ENCODE measurements at regions of chr3 and their contacts with region 1.

Region 1: DNA sequence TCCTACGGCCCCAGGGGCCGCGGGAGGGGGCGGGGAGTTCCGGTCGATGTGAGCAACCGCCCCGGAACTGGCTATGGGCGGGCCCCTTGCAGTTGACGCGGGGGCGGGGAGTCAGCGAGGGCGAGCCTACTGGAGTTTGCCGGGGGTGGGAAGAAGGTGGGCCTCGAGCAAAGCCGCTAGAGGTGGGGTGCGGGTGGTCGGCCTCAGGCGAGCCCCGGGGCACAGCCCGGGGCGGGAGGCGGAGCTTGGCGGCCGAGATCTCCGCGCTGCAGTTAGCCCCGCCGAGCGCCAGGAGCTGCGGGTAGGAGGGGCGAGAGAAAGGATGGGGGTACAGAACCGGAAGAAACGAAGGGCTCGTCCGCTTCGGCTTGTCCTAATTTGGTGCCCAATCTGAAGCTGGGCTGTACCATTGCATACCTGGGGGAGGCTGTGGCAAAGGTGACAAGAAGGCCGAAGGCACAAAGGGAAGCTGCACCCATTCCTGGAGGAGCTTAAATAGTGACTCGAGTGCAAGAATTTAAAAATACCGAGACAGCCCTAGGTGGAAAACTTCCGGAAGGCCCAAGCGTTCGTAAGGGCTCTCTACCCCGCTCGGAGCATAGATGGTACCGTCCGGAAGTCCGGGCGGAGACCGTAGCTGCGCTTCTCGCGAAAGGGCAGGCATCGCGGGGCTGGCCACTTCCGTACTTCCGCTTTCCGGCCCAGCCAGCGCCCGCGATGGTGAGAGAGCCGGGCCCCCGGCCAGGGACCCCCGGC is at the starts of genes ARPC4 and TADA3:
- DNase-seq: peak; percentile 96
- H3K4me3 Mint-ChIP-seq: peak within 1 kb of the TSS; percentile 98
- H3K27ac Mint-ChIP-seq: peak within 1 kb of the TSS; percentile 100
- H3K4me1 Mint-ChIP-seq: peaks cover 31% of the 10 kb centered on the region
- H3K27me3 Mint-ChIP-seq: no peaks in the 10 kb centered on the region
- CTCF ChIP-seq: no peak
- total RNA-seq, gene ARPC4: 122 and 132 TPM in 2 replicates
- total RNA-seq, gene TADA3: 72.0 and 77.1 TPM in 2 replicates

Region 2: DNA sequence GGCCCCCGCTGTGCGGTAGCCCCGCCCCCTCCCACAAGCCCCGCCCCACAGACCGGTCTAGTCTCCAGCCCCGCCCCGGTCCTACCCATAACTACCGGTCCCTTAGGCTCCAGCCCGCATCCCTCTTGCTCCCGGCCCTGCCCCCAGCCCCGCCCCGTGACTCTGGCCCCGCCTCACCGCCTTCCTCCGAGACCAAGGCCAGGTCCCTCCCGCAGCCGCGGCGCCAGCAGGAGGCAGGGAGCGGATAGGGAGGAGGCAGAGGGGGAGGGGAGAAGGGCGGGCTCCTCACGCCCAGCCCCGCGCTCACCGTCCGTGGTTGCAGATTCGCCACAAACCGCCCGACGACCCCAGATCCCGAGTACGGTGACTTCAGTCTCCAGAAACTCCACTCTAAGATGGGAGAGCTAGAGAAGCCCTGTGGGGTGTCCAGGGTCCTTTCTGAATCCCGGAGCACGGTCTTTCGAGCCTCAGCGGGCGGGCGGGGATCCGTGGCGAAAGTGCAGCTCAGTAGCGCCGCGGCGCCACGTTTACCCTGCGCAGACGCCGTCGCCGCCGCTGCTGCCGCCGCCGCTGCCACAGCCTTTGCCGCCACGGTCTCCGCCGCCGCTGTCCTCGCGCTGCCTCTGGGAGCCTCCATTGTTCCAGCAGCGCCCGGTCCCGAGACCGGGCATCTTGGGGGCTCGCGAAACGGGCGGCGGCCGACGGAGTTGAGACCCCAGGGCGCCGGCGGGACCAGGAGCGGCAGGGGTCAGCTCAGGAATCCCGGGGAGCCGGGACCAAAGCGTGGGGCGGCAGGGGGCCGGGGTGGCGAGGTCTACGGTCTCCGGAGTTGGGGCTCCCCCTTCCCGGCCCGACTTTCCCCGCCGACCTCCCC is 61.1 kb before region 1 on chr3 and contains the start of gene BRPF1:
- CTCF ChIA-PET with region 1: interaction called, 4 read pairs
- POLR2A ChIA-PET with region 1: interaction called, 35 read pairs
- intact Hi-C with region 1: no loop called
- DNase-seq: peak; percentile 99
- H3K4me3 Mint-ChIP-seq: peak within 1 kb of the TSS; percentile 76
- H3K27ac Mint-ChIP-seq: peak within 1 kb of the TSS; percentile 98
- H3K4me1 Mint-ChIP-seq: peaks cover 35% of the 10 kb centered on the region
- H3K27me3 Mint-ChIP-seq: no peaks in the 10 kb centered on the region
- CTCF ChIP-seq: no peak
- total RNA-seq, gene BRPF1: 19.9 and 21.4 TPM in 2 replicates

Region 3: GRCh38 chr3:9749645-9750555 is 42.7 kb before region 1 on chr3 and contains the start of gene OGG1:
- CTCF ChIA-PET with region 1: no interaction called
- POLR2A ChIA-PET with region 1: interaction called, 18 read pairs
- intact Hi-C with region 1: no loop called
- DNase-seq: peak; percentile 98
- H3K4me3 Mint-ChIP-seq: peak within 1 kb of the TSS; percentile 83
- H3K27ac Mint-ChIP-seq: peak within 1 kb of the TSS; percentile 84
- H3K4me1 Mint-ChIP-seq: peaks cover 17% of the 10 kb centered on the region
- H3K27me3 Mint-ChIP-seq: no peaks in the 10 kb centered on the region
- CTCF ChIP-seq: no peak
- total RNA-seq, gene OGG1: 15.3 and 17.7 TPM in 2 replicates

Region 4: GRCh38 chr3:9761919-9762318 is 30.7 kb before region 1 on chr3:
- CTCF ChIA-PET with region 1: no interaction called
- POLR2A ChIA-PET with region 1: no interaction called
- intact Hi-C with region 1: no loop called
- DNase-seq: no peak
- H3K4me3 Mint-ChIP-seq: no peak overlapping the region
- H3K27ac Mint-ChIP-seq: no peak overlapping the region
- H3K4me1 Mint-ChIP-seq: no peaks in the 10 kb centered on the region
- H3K27me3 Mint-ChIP-seq: no peaks in the 10 kb centered on the region
- CTCF ChIP-seq: no peak

Region 5: GRCh38 chr3:9809615-9810432 is 17.2 kb after region 1 on chr3 and contains the start of gene TTLL3:
- CTCF ChIA-PET with region 1: interaction called, 4 read pairs
- POLR2A ChIA-PET with region 1: interaction called, 23 read pairs
- intact Hi-C with region 1: no loop called
- DNase-seq: peak; percentile 62
- H3K4me3 Mint-ChIP-seq: peak within 1 kb of the TSS; percentile 70
- H3K27ac Mint-ChIP-seq: peak within 1 kb of the TSS; percentile 89
- H3K4me1 Mint-ChIP-seq: peaks cover 23% of the 10 kb centered on the region
- H3K27me3 Mint-ChIP-seq: no peaks in the 10 kb centered on the region
- CTCF ChIP-seq: no peak
- total RNA-seq, gene TTLL3: 14.6 and 16.6 TPM in 2 replicates

Region 6: DNA sequence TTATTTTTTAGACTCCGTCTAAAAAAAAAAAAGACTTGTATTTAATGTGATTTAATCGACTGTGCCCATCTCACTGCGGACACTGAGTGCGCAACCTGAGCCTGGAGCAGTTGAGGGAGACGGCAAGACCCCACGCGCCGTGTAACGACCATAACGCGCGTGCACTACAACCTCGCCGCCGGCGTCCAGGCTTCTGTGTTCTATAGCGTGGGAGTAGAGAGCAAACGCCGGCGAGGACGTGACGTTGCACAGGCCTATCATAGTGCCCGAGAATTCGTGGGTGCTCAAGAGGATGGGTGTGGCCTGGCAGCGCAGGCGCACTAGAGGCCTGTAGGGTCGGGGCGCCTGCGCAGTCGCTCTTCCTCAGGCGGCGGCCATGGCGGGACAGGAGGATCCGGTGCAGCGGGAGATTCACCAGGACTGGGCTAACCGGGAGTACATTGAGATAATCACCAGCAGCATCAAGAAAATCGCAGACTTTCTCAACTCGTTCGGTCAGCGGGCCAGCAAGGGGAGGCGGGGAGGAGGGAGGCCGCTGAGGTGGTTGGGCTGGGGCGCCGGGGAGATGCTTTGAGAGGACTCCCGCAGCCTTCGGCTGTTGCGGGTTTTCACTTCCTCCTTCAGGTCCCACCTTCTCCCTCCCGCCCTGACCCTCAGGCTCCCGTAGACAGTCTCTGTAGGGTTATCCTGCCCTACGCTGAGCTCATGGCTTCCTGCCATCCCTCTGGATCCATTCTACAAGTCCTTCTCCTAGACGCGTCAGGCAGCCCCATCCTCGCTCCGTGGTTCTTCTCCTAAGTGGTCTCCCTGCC is 322.9 kb after region 1 on chr3 and contains the start of gene BRK1:
- CTCF ChIA-PET with region 1: no interaction called
- POLR2A ChIA-PET with region 1: no interaction called
- intact Hi-C with region 1: no loop called
- DNase-seq: peak; percentile 97
- H3K4me3 Mint-ChIP-seq: peak within 1 kb of the TSS; percentile 94
- H3K27ac Mint-ChIP-seq: peak within 1 kb of the TSS; percentile 94
- H3K4me1 Mint-ChIP-seq: peaks cover 7% of the 10 kb centered on the region
- H3K27me3 Mint-ChIP-seq: no peaks in the 10 kb centered on the region
- CTCF ChIP-seq: no peak
- total RNA-seq, gene BRK1: 78.5 and 82.5 TPM in 2 replicates

Measured in MCF 10A (cell line).